Activated B cell treated with CpG ODN at 0.5 μM for 24 hours (primary cell): ENCODE measurements at regions of chr4 and their contacts with region 1.

Region 1: GRCh38 chr4:113869743-113870375 is 108.3 kb upstream of the CAMK2D start:
- DNase-seq: peak; percentile 40
- ATAC-seq: peak; percentile 94
- H3K4me3 Mint-ChIP-seq: peak overlapping the region; percentile 63
- H3K27ac Mint-ChIP-seq: peak overlapping the region; percentile 90
- H3K4me1 Mint-ChIP-seq: peaks cover 19% of the 10 kb centered on the region
- H3K27me3 Mint-ChIP-seq: no peaks in the 10 kb centered on the region
- CTCF ChIP-seq: no peak

Region 2: GRCh38 chr4:113908829-113909228 is 39.0 kb after region 1 on chr4:
- CTCF ChIA-PET with region 1: no interaction called
- POLR2A ChIA-PET with region 1: no interaction called
- intact Hi-C with region 1: loop called (anchors 5 kb)
- DNase-seq: no peak
- ATAC-seq: no peak
- H3K4me3 Mint-ChIP-seq: no peak overlapping the region
- H3K27ac Mint-ChIP-seq: no peak overlapping the region
- H3K4me1 Mint-ChIP-seq: no peaks in the 10 kb centered on the region
- H3K27me3 Mint-ChIP-seq: peaks cover 2% of the 10 kb centered on the region
- CTCF ChIP-seq: no peak